Left ventricle myocardium superior (tissue), 1 donor: ENCODE measurements at regions of chr3 and their contacts with region 1.

Region 1: GRCh38 chr3:155334914-155335723 is 41.6 kb upstream of the STRIT1 start:
- DNase-seq: no peak
- ATAC-seq: peak; percentile 43

Region 2: GRCh38 chr3:154341435-154341834 is 993.7 kb before region 1 on chr3:
- intact Hi-C with region 1: loop called (anchors 5 kb)
- DNase-seq: no peak
- ATAC-seq: no peak